Cardiac septum (tissue), 1 donor: ENCODE measurements at regions of chr1 and their contacts with region 1.

Region 1: GRCh38 chr1:35192853-35193664 is at the start of gene SFPQ:
- DNase-seq: peak; percentile 97
- total RNA-seq, gene SFPQ: 115 TPM

Region 2: GRCh38 chr1:35030756-35031446 is 162.2 kb before region 1 on chr1:
- intact Hi-C with region 1: loop called (anchors 2 kb)
- DNase-seq: no peak

Region 3: DNA sequence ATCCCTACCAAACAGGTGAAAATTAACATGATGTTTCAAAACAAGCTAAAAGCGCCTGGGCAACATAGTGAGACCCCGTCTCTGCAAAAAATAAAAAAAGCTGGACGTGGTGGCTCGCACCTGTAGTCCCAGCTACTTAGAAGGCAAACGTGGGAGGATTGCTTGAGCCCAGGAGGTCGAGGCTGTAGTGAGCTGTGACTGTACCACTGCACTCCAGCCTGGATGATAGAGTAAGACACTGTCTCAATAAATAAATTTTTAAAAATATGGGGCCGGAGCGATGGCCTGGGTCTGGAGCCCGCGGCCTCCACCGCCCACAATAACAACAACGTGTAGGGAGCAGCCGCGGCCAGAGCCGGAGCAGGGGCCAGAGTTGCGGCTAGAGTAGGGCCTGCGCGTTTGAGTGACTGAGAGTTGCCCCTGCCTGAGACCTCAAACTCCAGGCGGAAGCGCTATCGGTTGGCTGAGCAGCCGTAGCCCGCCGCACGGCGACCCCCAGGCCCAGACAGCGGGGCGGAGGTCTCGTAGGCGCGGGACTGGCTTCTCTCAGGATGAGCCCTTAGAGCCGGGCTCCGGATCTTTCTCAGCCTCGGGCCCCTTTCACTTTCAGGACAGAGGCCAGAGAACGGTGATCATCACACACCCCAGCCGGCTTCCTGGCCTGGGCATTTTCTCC is 72.5 kb before region 1 on chr1:
- intact Hi-C with region 1: no loop called
- DNase-seq: no peak

Region 4: DNA sequence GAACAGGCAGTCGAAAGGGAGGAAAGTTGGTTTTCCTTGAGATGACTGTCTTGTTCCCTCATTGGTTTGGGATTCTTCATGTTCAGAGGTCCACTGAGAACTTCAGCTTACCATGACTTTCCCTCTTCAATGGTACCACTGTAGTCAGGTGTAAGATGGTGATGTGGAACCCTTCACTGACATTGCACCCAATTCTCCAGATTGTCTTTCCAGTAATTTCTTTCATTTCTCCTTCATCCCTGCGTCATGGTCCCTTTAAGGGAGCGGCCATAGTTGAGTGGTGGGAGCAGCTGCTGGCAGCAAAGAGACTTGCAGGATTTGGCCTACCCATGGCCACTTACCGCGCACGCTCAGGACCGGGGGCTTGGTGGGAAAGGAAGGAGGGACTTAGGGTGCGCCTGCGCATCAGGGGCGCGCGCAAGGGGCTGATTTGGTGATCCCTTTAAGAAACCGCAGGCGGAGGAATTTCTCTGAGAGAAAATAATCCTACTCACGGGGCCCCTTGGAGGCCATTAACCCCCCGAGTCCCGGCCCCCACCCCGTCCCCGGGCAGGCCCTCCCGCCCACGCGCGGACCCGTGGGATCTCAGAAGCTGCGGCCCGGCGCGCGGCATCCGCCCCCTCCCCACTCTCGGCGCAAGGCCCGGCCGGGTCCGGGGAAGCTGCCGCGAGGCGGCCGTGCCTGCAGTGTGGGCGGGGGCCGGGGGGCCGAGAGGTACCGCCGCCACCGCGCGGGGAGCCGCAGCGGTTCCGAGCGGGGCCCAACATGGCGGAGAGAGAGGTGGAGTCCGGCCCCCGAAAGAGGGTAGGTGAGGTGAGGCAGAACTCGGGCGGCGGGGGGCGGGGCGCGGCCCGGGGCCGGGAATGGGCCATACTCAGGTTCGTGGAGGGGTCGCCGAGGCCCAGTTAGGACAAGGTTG is 75.5 kb after region 1 on chr1 and contains the start of gene ZMYM4:
- intact Hi-C with region 1: loop called (anchors 2 kb)
- DNase-seq: peak; percentile 91
- total RNA-seq, gene ZMYM4: 36.1 TPM

Region 5: DNA sequence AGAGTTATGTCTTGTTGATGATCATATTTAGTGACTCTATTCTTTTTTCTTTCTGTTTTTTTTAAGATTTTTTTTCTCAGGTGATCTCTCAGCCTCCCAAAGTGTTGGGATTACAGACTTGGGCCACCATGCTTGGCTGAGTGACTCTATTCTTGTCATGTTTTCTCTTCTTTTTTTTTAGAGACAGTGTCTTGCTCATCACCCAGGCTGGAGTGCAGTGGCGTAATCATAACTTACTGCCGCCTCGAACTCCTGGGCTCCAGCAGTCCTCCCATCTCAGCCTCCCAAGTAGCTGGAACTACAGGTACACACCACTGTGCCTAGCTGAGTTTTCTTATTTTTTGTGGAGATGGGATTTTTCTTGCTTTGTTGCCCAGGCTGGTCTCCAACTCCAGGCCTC is 112.3 kb after region 1 on chr1:
- intact Hi-C with region 1: no loop called
- DNase-seq: no peak

Region 6: GRCh38 chr1:35524106-35524505 is 331.0 kb after region 1 on chr1:
- intact Hi-C with region 1: no loop called
- DNase-seq: no peak

Region 7: DNA sequence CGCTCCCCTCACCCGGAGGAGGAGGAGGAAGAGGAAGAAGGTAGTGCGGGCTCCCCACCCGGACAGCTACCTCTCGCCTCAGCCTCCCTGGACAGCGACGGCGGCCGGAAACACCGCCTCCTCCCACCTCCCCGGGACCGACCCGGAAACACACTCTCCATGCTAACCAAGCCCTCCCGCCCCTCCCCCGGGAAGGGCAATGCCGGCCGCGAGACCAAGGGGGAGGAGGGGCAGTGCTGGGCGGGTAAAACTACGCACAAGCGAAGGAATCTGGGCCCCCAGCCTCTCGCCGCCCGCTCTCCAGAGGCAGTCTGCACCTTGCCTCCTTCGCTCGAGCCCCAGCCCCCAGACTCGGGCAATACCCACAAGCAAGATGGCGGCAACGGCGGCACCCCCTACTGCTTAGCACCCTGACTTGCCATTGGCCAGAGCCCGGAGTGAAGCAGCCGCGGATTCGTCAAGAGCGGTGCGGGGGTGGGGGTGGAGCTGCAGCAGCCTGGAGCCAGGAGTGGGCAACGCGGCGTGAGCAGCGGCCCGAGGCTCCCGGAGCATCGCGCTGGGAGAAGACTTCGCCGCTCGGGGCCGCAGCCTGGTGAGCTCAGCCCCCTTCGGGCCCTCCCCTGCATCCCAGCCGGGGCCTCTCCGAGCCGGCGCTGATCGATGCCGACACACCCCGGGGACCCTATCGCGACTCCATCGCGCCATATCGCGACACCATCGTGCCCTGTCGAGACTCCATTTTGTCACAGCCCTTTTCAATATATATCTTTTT is 364.4 kb after region 1 on chr1 and contains the starts of genes KIAA0319L and NCDN:
- intact Hi-C with region 1: loop called (anchors 5 kb)
- DNase-seq: peak; percentile 97
- total RNA-seq, gene KIAA0319L: 84.0 TPM
- total RNA-seq, gene NCDN: 56.0 TPM